H1 (cell line): ENCODE measurements at regions of chr18 and their contacts with region 1.

Region 1: GRCh38 chr18:4106407-4107033 is 348.6 kb downstream of the DLGAP1 start:
- DNase-seq: peak in 1 of 2 experiments; percentile 88
- H3K4me3 ChIP-seq: no peak overlapping the region
- H3K27ac ChIP-seq: no peak overlapping the region
- H3K4me1 ChIP-seq: peaks cover 2 to 14% (median 9%) of the 10 kb centered on the region in 4 experiments; a peak in 6 of 7 replicates
- H3K27me3 ChIP-seq: no peaks in the 10 kb centered on the region
- CTCF ChIP-seq: peak; percentile 54 to 84 (median 67)
- EP300 ChIP-seq: no peak
- POLR2A ChIP-seq: no peak
- RAD21 ChIP-seq: peak; percentile 79 to 82

Region 2: GRCh38 chr18:4096486-4096885 is 10.0 kb before region 1 on chr18:
- CTCF ChIA-PET with region 1: interaction called, 40 read pairs
- POLR2A ChIA-PET with region 1: interaction called, 6 read pairs
- DNase-seq: no peak
- H3K4me3 ChIP-seq: no peak overlapping the region
- H3K27ac ChIP-seq: no peak overlapping the region
- H3K4me1 ChIP-seq: peaks cover 0 to 2% (median 0%) of the 10 kb centered on the region in 4 experiments; a peak in 2 of 7 replicates
- H3K27me3 ChIP-seq: no peaks in the 10 kb centered on the region
- CTCF ChIP-seq: no peak
- EP300 ChIP-seq: no peak
- POLR2A ChIP-seq: no peak
- RAD21 ChIP-seq: no peak

Region 3: DNA sequence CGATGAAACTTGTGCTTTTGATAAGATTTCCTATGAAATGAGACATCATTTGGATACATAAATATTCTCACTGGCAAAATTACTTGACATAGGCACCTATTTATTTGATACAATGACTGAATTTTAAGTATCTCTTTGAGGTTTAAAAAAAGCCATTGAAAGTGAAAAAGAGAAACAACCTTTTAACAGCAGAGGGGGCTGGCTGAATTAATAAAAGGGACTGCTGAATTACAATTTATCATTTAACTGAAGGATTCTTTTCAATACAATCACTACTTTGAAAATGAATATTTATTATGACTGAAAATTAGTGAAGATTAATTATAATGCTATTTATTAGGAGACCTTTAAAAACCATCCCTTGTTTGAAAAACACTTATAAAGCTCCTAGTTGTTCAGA is 13.3 kb after region 1 on chr18:
- CTCF ChIA-PET with region 1: interaction called, 69 read pairs
- POLR2A ChIA-PET with region 1: interaction called, 6 read pairs
- DNase-seq: no peak
- H3K4me3 ChIP-seq: peak overlapping the region in 1 of 4 experiments; percentile 44; a peak in 1 of 8 replicates
- H3K27ac ChIP-seq: peak overlapping the region; percentile 50; the same call in 1 of the 2 replicates
- H3K4me1 ChIP-seq: peaks cover 8 to 29% (median 23%) of the 10 kb centered on the region in 4 experiments
- H3K27me3 ChIP-seq: no peaks in the 10 kb centered on the region
- CTCF ChIP-seq: no peak
- EP300 ChIP-seq: no peak
- POLR2A ChIP-seq: no peak
- RAD21 ChIP-seq: peak in 1 of 2 experiments; percentile 18; a peak in 1 of 4 replicates

Region 4: DNA sequence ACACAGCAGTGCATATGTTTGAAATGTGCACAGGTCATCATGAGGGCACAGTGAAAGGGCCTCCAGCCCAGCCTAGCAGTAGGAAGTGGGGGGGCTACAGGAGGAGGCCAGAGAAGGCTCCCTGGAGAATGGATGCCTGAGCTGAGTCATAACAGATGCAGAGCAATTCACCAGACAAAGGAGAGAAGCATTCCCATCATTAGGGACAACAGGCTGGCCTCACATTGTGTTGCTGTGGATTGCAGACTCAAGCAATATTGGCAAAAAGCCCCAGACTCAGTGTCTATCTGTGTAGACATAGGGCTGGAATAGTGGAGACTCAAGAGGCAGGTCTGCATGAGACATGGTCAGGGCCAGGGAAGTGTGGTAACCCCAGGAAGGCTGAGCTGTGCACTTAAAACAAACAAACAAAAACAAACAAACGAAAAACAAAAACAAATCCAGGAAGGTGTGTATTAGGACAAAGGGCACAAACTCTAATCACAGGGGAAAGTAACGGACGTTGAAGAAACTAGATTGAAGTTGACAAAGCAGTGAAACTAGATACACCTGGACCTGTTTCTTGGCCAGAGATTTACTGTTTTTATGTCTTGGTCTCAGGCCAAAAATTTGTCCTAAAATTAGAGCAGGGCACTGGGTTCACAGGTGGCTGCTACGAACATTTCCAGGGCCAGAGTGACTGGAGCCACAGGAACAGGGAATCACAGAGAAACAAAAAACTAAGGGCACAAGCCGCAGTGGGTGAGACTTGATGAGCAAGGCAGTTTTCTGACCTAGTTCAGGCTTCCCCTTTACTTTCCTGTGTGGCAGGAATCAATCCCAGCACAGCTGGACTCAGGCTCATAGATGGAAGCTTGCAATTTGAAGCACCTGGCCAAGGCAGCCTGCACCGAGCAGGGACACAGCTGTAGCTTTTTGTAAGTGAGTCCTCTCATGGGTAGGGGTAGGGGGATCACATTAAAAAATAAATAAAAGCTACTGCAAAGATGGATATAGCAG is 19.0 kb after region 1 on chr18:
- CTCF ChIA-PET with region 1: interaction called, 69 read pairs
- POLR2A ChIA-PET with region 1: no interaction called
- DNase-seq: no peak
- H3K4me3 ChIP-seq: no peak overlapping the region
- H3K27ac ChIP-seq: peak overlapping the region; percentile 58
- H3K4me1 ChIP-seq: peaks cover 12 to 33% (median 25%) of the 10 kb centered on the region in 4 experiments; a peak in 6 of 7 replicates
- H3K27me3 ChIP-seq: no peaks in the 10 kb centered on the region
- CTCF ChIP-seq: no peak
- EP300 ChIP-seq: no peak
- POLR2A ChIP-seq: no peak
- RAD21 ChIP-seq: no peak

Region 5: GRCh38 chr18:4144201-4144600 is 37.7 kb after region 1 on chr18:
- CTCF ChIA-PET with region 1: interaction called, 23 read pairs
- POLR2A ChIA-PET with region 1: no interaction called
- DNase-seq: no peak
- H3K4me3 ChIP-seq: no peak overlapping the region
- H3K27ac ChIP-seq: no peak overlapping the region
- H3K4me1 ChIP-seq: peaks cover 6 to 7% (median 7%) of the 10 kb centered on the region in 4 experiments; a peak in 5 of 7 replicates
- H3K27me3 ChIP-seq: no peaks in the 10 kb centered on the region
- CTCF ChIP-seq: peak in 2 of 3 experiments; percentile 21 to 45; a peak in 2 of 4 replicates
- EP300 ChIP-seq: no peak
- POLR2A ChIP-seq: no peak
- RAD21 ChIP-seq: peak in 1 of 2 experiments; percentile 37; a peak in 3 of 4 replicates